Ascending aorta (tissue), 2 donors: ENCODE measurements at regions of chr6 and their contacts with region 1.

Region 1: GRCh38 chr6:47477497-47478232 is at the start of gene CD2AP:
- DNase-seq: peak; percentile 53 to 89
- H3K4me3 ChIP-seq: peak within 1 kb of the TSS; percentile 85 to 96
- H3K27ac ChIP-seq: peak within 1 kb of the TSS; percentile 98
- H3K4me1 ChIP-seq: peaks cover 0 to 3% of the 10 kb centered on the region in 2 donors
- H3K27me3 ChIP-seq: no peaks in the 10 kb centered on the region
- CTCF ChIP-seq: peak in 1 of 3 experiments; percentile 24
- total RNA-seq, gene CD2AP: 18.9 TPM

Region 2: GRCh38 chr6:47146428-47147174 is 331.1 kb before region 1 on chr6:
- intact Hi-C with region 1: no loop called
- DNase-seq: no peak
- H3K4me3 ChIP-seq: no peak overlapping the region
- H3K27ac ChIP-seq: no peak overlapping the region
- H3K4me1 ChIP-seq: no peaks in the 10 kb centered on the region
- H3K27me3 ChIP-seq: no peaks in the 10 kb centered on the region
- CTCF ChIP-seq: no peak

Region 3: GRCh38 chr6:47362857-47363461 is 114.7 kb before region 1 on chr6:
- intact Hi-C with region 1: no loop called
- DNase-seq: no peak
- H3K4me3 ChIP-seq: no peak overlapping the region
- H3K27ac ChIP-seq: no peak overlapping the region
- H3K4me1 ChIP-seq: no peaks in the 10 kb centered on the region
- H3K27me3 ChIP-seq: no peaks in the 10 kb centered on the region
- CTCF ChIP-seq: no peak

Region 4: GRCh38 chr6:47519279-47519678 is 41.6 kb after region 1 on chr6:
- intact Hi-C with region 1: loop called (anchors 5 kb)
- DNase-seq: no peak
- H3K4me3 ChIP-seq: no peak overlapping the region
- H3K27ac ChIP-seq: no peak overlapping the region
- H3K4me1 ChIP-seq: peaks cover 0 to 5% of the 10 kb centered on the region in 2 donors
- H3K27me3 ChIP-seq: no peaks in the 10 kb centered on the region
- CTCF ChIP-seq: no peak

Region 5: GRCh38 chr6:48826901-48827701 is 1349.4 kb after region 1 on chr6:
- intact Hi-C with region 1: loop called (anchors 10 kb)
- DNase-seq: peak in 1 of 2 donors; percentile 84
- H3K4me3 ChIP-seq: no peak overlapping the region
- H3K27ac ChIP-seq: peak overlapping the region; percentile 46 to 75
- H3K4me1 ChIP-seq: peaks cover 0 to 14% of the 10 kb centered on the region in 2 donors
- H3K27me3 ChIP-seq: no peaks in the 10 kb centered on the region
- CTCF ChIP-seq: no peak

Region 6: GRCh38 chr6:49462927-49463611 is 1985.4 kb after region 1 on chr6 and contains the starts of genes CENPQ and MMUT:
- intact Hi-C with region 1: loop called (anchors 2 kb)
- DNase-seq: peak; percentile 85 to 97
- H3K4me3 ChIP-seq: peak within 1 kb of the TSS; percentile 79 to 87
- H3K27ac ChIP-seq: peak within 1 kb of the TSS; percentile 88 to 93
- H3K4me1 ChIP-seq: peaks cover 0 to 24% of the 10 kb centered on the region in 2 donors
- H3K27me3 ChIP-seq: no peaks in the 10 kb centered on the region
- CTCF ChIP-seq: no peak
- total RNA-seq, gene CENPQ: not detected
- total RNA-seq, gene MMUT: 8.7 TPM